RWPE1 (cell line): ENCODE measurements at regions of chr4 and their contacts with region 1.

Region 1: GRCh38 chr4:107877346-107877745 is 52.6 kb downstream of the SGMS2 start:
- DNase-seq: no peak
- H3K27ac ChIP-seq: no peak overlapping the region
- CTCF ChIP-seq: no peak

Region 2: GRCh38 chr4:108051343-108051742 is 174.0 kb after region 1 on chr4:
- CTCF ChIA-PET with region 1: no interaction called
- POLR2A ChIA-PET with region 1: interaction called, 10 read pairs
- DNase-seq: no peak
- H3K27ac ChIP-seq: no peak overlapping the region
- CTCF ChIP-seq: no peak